OCI-LY7 (cell line): ENCODE measurements at regions of chr12 and their contacts with region 1.

Region 1: DNA sequence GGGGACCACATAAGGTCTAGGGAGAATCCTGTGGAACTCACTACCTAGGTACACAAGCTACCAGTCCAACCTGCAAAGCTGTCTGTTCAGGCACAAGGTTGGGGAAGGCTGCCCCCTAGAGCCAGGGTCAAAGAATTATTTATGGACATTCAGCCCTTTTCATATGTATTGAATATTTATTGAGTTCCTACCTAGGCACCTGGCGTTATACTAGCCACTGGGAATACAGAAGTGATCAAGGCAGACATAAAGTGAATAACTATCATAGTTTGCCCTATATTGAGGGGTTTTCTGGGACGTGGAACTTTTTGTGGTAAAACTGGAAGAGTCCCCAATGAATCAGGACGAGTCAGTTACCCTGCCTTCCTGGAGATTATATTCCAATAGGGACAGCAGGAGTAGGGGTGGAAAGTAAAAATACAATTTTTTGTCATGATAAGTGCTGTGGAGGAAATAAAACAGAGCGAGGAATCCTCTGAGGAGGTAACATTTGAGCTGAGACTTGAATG is 5.8 kb upstream of the SLC48A1 start:
- DNase-seq: peak; percentile 78
- H3K4me3 ChIP-seq: no peak overlapping the region
- H3K27ac ChIP-seq: no peak overlapping the region
- H3K4me1 ChIP-seq: peaks cover 19% of the 10 kb centered on the region
- CTCF ChIP-seq: peak; percentile 86

Region 2: GRCh38 chr12:47504775-47505446 is 262.4 kb before region 1 on chr12:
- CTCF ChIA-PET with region 1: no interaction called
- POLR2A ChIA-PET with region 1: no interaction called
- intact Hi-C with region 1: no loop called
- DNase-seq: no peak
- H3K4me3 ChIP-seq: no peak overlapping the region
- H3K27ac ChIP-seq: no peak overlapping the region
- H3K4me1 ChIP-seq: no peaks in the 10 kb centered on the region
- CTCF ChIP-seq: no peak

Region 3: DNA sequence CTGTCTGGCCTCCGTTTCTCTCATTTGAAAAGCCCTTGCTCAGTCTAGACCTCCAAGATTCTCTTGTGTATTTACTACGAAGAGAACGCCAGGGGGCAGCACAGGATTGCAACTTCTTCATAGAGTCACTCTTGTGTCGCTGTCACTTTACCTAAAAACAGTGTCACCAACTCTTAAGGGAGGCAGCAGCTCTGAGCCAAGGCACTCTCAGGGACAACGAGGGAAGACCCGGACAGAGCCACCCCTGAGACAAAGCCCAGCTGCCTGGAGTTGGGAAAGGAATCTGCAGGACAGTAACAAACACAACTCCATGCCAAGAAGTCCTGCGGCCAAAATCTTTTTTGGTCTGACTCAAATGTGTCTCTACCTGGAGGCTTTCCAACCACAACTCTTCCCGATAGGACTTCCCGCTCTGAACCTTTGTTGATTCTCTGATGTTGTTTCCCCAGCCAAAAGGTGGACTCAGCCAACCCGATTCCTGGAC is 51.8 kb before region 1 on chr12:
- CTCF ChIA-PET with region 1: interaction called, 8 read pairs
- POLR2A ChIA-PET with region 1: no interaction called
- intact Hi-C with region 1: loop called (anchors 1 kb)
- DNase-seq: peak; percentile 91
- H3K4me3 ChIP-seq: no peak overlapping the region
- H3K27ac ChIP-seq: no peak overlapping the region
- H3K4me1 ChIP-seq: peaks cover 20% of the 10 kb centered on the region
- CTCF ChIP-seq: peak; percentile 93

Region 4: DNA sequence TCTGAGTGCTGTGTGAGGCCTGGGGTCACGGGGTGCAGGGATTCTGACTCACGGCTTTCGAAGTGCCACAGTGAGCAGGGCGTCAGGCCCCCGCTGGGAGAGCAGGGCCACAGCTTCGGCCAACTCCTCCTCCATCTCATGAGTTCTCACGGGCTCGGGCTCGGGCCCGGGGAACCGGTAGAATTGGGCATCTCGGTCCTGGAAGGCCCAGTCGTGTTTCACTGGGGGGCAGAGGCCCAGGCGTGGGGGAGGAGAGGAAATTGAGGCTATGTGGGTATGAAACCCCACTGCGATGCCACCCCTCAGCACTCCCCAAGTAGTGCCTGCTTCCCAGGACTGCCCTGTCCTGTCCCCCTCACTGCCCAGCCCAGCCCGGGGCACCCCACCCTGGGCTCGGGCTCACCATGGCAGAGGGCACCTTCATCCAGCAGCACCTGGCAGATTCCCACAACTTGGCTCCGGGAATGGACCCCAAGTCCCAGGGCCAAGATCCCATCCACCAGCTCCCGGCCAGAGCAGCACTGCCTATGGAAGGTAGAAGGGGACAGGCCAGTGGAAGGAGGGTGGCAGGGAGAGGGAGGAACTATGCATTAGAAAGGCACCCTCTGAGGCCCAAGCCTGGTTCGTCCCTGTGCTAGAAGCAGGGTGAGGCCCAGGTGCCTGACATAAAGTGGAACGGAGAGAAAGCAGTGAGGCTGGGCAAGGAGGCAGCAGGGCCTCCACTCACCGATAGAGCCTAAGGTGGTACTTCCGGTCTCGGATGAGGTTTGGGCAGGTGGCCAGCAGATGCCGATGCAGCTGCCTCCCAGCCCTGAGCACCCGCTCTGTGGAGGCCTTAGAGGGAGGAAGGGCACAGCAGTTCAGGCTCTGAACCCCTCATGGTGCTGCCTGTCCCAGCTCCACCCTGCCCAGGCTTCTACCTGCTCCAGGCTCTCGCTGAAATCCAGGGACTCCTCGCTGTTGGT is 16.0 kb before region 1 on chr12:
- CTCF ChIA-PET with region 1: interaction called, 14 read pairs
- POLR2A ChIA-PET with region 1: interaction called, 9 read pairs
- intact Hi-C with region 1: no loop called
- DNase-seq: peak; percentile 45
- H3K4me3 ChIP-seq: no peak overlapping the region
- H3K27ac ChIP-seq: no peak overlapping the region
- H3K4me1 ChIP-seq: peaks cover 62% of the 10 kb centered on the region
- CTCF ChIP-seq: no peak